ENCODE measurements at regions of chr10 and their contacts with region 1.

Region 1: GRCh38 chr10:4767033-4767814 is 58.8 kb upstream of the AKR1E2 start:
- DNase-seq: peak; percentile 74
- H3K4me3 ChIP-seq: no peak overlapping the region
- H3K27ac ChIP-seq: peak overlapping the region; percentile 96
- H3K4me1 ChIP-seq: peaks cover 83% of the 10 kb centered on the region
- H3K27me3 ChIP-seq: no peaks in the 10 kb centered on the region
- CTCF ChIP-seq: peak; percentile 49 to 50
- POLR2A ChIP-seq: no peak

Region 2: DNA sequence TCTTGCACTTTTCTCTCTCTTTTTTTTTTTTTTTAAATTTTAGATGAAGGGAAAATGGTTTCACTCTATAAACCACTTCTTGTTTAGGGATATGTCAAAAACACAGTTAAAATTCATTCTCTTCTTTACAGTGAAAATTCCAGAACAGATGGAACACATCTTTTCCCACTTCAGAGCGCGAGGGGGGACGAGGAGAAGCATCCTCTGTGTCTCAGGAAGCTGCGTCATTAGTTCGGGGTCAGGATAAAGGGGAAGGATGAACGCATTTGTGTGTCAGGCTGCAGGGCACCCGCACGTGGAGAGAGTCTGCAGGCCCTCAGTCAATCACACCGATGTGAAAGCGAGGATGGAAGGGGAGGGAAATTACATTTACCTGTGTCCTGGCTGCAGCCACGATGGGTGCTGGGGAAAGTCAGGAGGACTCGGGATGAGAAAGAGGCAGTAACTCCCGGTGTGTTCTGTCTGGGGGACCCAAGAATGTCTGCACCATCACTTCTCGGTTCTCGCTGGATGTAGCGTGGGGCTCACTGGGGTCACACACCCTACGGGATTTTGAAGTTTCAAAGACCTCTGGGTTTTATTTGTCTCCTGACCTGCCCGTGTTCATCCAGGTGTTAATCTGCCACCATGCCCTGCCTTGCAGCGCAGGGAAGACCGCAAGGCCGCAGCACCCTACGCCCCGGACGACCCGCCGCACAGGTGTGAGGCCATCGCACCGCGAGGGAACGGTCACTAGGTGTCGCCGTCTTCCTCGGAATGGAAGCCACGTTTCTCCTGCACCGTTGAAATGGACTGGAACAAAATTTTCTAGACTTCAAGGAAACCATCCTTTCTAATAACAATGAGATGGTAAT is 1527.9 kb before region 1 on chr10:
- CTCF ChIA-PET with region 1: interaction called, 7 read pairs
- POLR2A ChIA-PET with region 1: no interaction called
- dilution Hi-C with region 1: no loop called
- intact Hi-C with region 1: loop called (anchors 2 kb)
- DNase-seq: peak; percentile 78
- H3K4me3 ChIP-seq: no peak overlapping the region
- H3K27ac ChIP-seq: peak overlapping the region; percentile 80
- H3K4me1 ChIP-seq: peaks cover 11% of the 10 kb centered on the region
- H3K27me3 ChIP-seq: no peaks in the 10 kb centered on the region
- CTCF ChIP-seq: peak; percentile 86 to 87
- POLR2A ChIP-seq: no peak

Region 3: DNA sequence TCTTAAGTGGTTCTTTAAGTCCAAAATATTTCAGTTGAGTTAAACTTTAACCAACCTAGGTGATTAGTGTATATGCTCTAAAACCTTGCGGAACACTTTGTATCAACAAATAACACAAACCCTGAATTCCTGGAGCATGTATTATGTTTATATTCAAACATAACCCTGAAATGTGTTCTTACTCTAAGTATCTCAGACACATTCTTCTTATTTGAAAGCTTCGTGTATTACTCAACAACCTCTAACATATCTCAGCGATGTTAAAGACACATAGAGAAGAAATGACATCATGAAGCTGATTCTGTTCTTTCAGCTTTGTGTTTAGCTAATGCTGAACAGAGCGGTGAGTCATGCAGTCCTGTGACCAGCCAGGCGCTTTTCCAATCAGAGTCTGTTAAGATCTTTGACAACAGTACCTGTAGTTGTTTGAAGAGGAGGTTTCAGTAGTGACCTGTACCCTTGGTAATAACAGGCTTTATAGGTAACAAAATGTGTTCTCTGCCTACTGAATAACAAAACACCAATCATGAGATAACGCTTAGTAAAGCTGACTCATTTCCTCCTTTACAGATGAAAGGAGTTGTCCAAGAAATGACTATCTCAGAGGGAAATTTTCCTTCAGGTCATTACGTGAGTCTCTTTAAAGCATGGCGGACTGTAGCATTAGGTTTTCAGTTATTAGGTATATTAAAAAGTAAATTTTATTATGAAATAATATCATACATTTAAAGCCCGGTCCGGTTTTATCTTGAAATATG is 914.9 kb before region 1 on chr10:
- CTCF ChIA-PET with region 1: no interaction called
- POLR2A ChIA-PET with region 1: no interaction called
- dilution Hi-C with region 1: no loop called
- intact Hi-C with region 1: loop called (anchors 1 kb)
- DNase-seq: peak; percentile 98
- H3K4me3 ChIP-seq: no peak overlapping the region
- H3K27ac ChIP-seq: peak overlapping the region; percentile 93
- H3K4me1 ChIP-seq: peaks cover 23% of the 10 kb centered on the region
- H3K27me3 ChIP-seq: no peaks in the 10 kb centered on the region
- CTCF ChIP-seq: no peak
- POLR2A ChIP-seq: no peak

Region 4: DNA sequence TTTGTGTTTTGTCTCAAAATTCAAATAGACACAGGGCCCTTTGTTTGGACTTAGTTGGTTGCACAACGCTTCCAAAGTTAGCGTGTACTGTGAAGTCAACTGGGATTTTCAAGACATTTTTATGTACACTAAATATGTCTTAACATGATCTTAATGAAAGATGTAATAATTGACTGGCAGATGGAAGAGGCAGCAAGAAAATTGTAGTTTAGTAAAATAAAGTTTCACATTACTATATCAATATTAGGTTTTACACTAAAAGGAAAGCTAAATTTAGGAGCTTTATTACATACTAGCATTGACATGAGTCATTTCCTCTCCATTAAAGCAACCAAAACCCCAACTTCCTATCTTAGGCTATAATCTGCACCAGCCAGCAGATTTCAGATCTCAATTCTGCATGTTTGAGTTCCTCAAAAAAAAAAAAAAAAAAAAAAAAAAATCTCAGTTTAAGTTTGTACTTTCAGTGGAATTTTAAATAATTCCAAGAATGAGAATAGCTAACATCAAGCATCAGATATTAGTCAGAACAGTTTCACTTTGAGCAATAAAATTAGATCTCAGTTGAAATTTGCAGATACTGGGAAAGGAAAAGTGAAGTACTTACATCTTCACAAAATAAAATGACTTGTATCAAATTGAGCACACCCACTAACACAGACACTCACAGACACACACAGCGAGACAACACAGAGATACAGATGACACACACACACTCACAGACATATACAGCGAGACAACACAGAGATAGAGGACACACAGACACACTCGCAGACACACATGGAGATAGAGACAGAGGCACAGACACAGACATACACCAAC is 635.6 kb before region 1 on chr10:
- CTCF ChIA-PET with region 1: interaction called, 4 read pairs
- POLR2A ChIA-PET with region 1: no interaction called
- dilution Hi-C with region 1: no loop called
- intact Hi-C with region 1: loop called (anchors 1 kb)
- DNase-seq: peak; percentile 86
- H3K4me3 ChIP-seq: peak overlapping the region in 1 of 3 experiments; percentile 47
- H3K27ac ChIP-seq: peak overlapping the region; percentile 92
- H3K4me1 ChIP-seq: peaks cover 48% of the 10 kb centered on the region
- H3K27me3 ChIP-seq: no peaks in the 10 kb centered on the region
- CTCF ChIP-seq: no peak
- POLR2A ChIP-seq: no peak

Region 5: DNA sequence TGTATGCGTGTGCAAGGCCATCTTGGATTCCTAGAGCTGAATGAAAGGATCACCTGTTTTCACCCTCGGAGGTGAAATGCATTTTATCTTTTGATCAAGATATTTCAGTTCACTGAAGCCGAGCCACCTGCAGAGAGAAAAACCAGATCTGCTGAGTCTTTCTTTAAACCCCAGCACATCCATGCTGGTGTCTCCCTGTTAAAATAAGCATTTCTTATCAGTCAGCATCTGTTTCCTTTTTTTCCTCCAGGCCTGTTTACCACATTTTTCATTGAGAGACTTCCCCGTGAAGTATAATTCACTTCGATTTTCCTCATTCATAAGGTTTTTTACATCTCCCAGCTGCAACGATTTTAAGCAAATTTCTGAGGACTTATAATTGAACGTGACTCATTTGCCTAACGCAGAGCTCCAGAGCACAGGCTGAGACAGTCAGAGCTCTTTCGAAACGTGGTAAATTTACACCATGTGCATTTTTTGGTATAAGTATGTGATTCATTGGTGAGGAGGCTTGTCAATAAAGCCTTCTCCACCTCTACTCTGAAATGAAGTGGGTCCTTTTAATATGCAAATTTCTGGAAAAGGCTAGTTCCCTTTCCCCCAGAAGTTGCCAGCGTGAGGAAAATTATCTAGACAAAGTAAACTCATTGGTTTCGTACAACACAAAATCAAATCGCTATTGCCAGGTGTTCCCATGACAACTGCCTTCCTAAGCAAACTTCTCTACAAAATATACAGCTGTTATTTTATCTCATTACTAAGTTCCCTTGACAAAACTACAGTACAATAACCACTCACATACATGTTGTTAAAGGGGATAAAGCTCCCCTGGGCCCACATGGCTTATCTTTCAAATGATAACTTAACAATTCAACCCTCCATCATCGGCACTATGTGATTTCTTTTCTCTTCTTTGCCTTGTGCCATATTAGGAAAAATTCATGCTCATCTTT is 316.0 kb before region 1 on chr10:
- CTCF ChIA-PET with region 1: interaction called, 3 read pairs
- POLR2A ChIA-PET with region 1: no interaction called
- dilution Hi-C with region 1: no loop called
- intact Hi-C with region 1: loop called (anchors 2 kb)
- DNase-seq: peak; percentile 96
- H3K4me3 ChIP-seq: no peak overlapping the region
- H3K27ac ChIP-seq: peak overlapping the region; percentile 85
- H3K4me1 ChIP-seq: peaks cover 23% of the 10 kb centered on the region
- H3K27me3 ChIP-seq: no peaks in the 10 kb centered on the region
- CTCF ChIP-seq: no peak
- POLR2A ChIP-seq: no peak

Region 6: GRCh38 chr10:4678023-4678950 is 88.9 kb before region 1 on chr10:
- CTCF ChIA-PET with region 1: interaction called, 7 read pairs
- POLR2A ChIA-PET with region 1: interaction called, 4 read pairs
- dilution Hi-C with region 1: no loop called
- intact Hi-C with region 1: loop called (anchors 1 kb)
- DNase-seq: peak; percentile 94
- H3K4me3 ChIP-seq: peak overlapping the region; percentile 32 to 99 (median 71)
- H3K27ac ChIP-seq: peak overlapping the region; percentile 84
- H3K4me1 ChIP-seq: peaks cover 31% of the 10 kb centered on the region
- H3K27me3 ChIP-seq: no peaks in the 10 kb centered on the region
- CTCF ChIP-seq: no peak
- POLR2A ChIP-seq: no peak

Measured in endothelial cell of umbilical vein (primary cell).